Upper lobe of right lung (tissue), 1 donor: ENCODE measurements at regions of chr13 and their contacts with region 1.

Region 1: DNA sequence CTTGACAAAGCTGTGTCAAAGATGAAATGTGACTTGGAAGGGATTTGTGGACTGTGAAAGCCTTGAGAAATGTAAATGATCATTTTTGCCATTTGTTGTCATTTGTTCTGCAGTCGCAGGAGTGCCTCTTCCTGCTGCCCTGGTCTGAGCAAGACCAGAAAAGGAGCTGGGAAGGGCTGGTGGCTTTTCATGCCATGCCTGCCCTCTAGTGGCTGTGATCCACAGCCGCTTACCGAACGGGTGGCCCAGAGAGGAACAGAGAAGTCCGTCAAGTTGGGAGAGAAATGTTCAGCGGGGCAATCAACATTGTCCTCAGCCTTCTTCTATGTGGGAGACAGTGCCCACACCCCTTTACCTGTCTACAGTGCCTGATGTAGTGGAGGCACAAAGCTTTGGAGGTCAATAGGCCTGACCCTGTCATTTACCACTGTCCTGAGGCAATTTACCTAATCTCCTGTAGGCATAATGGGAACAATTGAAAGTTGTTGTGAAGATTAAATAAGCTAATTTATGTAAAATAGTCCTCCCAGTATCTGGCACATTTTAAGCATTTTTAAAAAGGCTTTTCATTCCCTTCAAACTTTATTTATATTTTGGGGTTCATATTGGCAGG is 224.4 kb downstream of the B3GLCT start:
- DNase-seq: peak; percentile 85
- ATAC-seq: peak; percentile 98
- H3K4me3 ChIP-seq: no peak overlapping the region
- H3K27ac ChIP-seq: no peak overlapping the region
- H3K4me1 ChIP-seq: no peaks in the 10 kb centered on the region
- H3K27me3 ChIP-seq: no peaks in the 10 kb centered on the region
- CTCF ChIP-seq: peak; percentile 84

Region 2: DNA sequence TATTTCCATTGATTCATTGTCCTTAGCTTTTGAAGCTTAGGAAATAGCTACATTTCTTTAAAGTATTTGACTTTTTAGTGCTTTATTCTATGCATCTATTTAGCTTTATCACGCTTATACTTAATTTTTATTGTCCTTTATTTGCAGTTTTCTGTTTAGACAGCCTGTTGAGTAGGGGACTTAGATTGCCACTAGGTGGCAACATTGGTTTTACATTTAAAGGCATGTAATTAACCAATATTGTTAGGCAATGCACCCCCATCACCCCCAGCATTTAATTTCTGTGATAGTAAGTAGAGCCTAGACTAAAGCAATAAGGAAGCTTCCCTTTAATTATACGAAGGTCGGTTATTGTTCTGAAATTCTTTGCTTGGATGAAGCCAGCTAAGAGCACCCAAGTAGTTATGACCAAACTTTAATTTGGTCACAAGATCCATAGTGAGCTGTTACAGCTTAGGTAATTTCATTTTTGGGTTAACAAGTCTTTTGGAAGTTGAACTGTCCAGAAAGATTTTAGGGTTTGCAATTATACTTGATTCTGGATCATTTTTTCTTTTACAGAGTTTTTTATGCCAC is 187.9 kb before region 1 on chr13:
- intact Hi-C with region 1: loop called (anchors 10 kb)
- DNase-seq: no peak
- ATAC-seq: peak; percentile 54
- H3K4me3 ChIP-seq: no peak overlapping the region
- H3K27ac ChIP-seq: no peak overlapping the region
- H3K4me1 ChIP-seq: no peaks in the 10 kb centered on the region
- H3K27me3 ChIP-seq: no peaks in the 10 kb centered on the region
- CTCF ChIP-seq: peak; percentile 73